ENCODE measurements at regions of chr22 and their contacts with region 1.

Region 1: GRCh38 chr22:41360126-41360525 is 21.6 kb upstream of the TEF start:
- DNase-seq: peak; percentile 71
- ATAC-seq: peak; percentile 93
- H3K4me3 Mint-ChIP-seq: no peak overlapping the region; the same call in 1 of the 2 replicates
- H3K27ac Mint-ChIP-seq: peak overlapping the region; percentile 75
- H3K4me1 Mint-ChIP-seq: peaks cover 18% of the 10 kb centered on the region
- H3K27me3 Mint-ChIP-seq: no peaks in the 10 kb centered on the region
- CTCF ChIP-seq: no peak

Region 2: DNA sequence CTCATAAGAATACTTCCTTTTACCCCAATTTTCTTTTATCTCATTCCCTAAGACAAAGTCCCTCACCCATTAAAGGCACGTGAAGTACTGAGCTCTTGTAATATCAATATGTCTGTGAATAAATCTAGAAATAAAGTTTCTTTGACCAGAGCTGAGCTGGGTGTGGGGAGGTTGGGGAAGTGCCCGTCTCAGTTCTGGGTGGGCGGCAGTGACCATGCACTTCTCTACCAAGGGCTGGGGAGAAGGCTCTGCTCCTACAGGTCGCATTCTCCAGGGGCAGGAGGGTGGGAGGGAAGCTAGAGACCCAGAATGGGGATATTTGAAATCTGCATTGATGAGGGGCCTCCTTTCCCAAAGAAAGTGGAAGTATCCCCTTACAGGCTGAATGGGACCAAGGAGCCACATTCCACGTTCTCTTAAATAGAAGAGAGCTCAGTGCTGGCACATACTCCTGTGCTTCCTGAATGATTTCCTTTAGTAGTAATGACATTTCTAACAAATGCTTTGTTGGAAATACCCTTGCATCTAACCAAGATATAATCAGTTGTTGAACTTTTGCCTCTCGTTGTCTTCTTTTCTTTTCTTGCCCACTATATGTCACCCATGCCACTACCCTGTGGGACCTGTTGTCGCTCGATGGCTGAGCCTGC is 392.9 kb before region 1 on chr22:
- CTCF ChIA-PET with region 1: no interaction called
- POLR2A ChIA-PET with region 1: interaction called, 12 read pairs
- DNase-seq: no peak
- ATAC-seq: no peak
- H3K4me3 Mint-ChIP-seq: no peak overlapping the region
- H3K27ac Mint-ChIP-seq: 0 out of 2 replicates have a peak overlapping the region, but pooled peaks have one; percentile 3
- H3K4me1 Mint-ChIP-seq: no peaks in the 10 kb centered on the region
- H3K27me3 Mint-ChIP-seq: no peaks in the 10 kb centered on the region
- CTCF ChIP-seq: no peak

Region 3: GRCh38 chr22:41226723-41227655 is 133.1 kb before region 1 on chr22:
- CTCF ChIA-PET with region 1: no interaction called
- POLR2A ChIA-PET with region 1: no interaction called
- DNase-seq: no peak
- ATAC-seq: no peak
- H3K4me3 Mint-ChIP-seq: no peak overlapping the region
- H3K27ac Mint-ChIP-seq: peak overlapping the region; percentile 61
- H3K4me1 Mint-ChIP-seq: no peaks in the 10 kb centered on the region
- H3K27me3 Mint-ChIP-seq: no peaks in the 10 kb centered on the region
- CTCF ChIP-seq: no peak

Measured in WTC11 (cell line).